ENCODE measurements at regions of chrX and their contacts with region 1.

Region 1: DNA sequence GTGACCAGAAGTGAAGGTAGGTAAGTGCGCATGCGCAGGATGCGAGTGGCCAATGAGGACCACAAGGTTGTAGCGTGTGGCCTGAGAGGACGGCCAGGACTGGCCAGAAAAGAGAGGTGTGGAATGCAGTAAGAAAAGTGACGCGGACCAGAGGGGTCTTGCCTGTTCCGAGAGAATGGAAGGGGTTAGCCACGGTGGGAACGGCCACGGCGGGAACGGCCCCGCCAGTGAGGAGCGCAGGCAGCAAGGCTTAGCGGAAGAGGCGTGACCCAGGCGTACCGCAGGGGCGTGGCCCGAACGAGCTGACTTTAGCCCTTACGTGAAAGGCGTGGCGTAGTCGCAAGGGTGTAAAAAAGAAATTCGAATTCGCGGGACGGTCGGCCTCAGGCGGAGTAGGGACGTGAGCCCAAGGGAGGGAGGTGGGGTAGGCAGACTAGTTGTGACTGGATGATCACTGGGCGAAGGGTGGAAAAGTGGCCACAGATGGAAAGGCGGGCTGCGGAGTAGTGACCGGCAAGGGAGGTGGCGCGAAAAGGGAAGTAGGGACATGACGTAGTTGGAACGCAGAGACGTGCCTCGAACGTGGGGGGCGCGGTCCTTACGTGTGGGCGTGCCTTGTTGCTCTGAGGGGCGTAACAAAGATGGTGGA is 10.4 kb upstream of the CLTRN start:
- DNase-seq: peak; percentile 99
- H3K4me3 ChIP-seq: peak overlapping the region; percentile 62 to 81 (median 64)
- H3K27ac ChIP-seq: peak overlapping the region; percentile 92 to 99 (median 96)
- H3K4me1 ChIP-seq: peaks cover 0 to 29% (median 6%) of the 10 kb centered on the region in 4 donors
- H3K27me3 ChIP-seq: no peaks in the 10 kb centered on the region
- CTCF ChIP-seq: no peak
- EP300 ChIP-seq: no peak
- POLR2A ChIP-seq: peak; percentile 25 to 28

Region 2: GRCh38 chrX:15335135-15336022 is 339.6 kb before region 1 on chrX and contains the start of gene PIGA:
- intact Hi-C with region 1: loop called (anchors 5 kb)
- DNase-seq: peak; percentile 98
- H3K4me3 ChIP-seq: peak within 1 kb of the TSS; percentile 70 to 78 (median 73)
- H3K27ac ChIP-seq: peak within 1 kb of the TSS; percentile 78 to 86 (median 82)
- H3K4me1 ChIP-seq: peaks cover 0 to 5% (median 0%) of the 10 kb centered on the region in 4 donors
- H3K27me3 ChIP-seq: no peaks in the 10 kb centered on the region
- CTCF ChIP-seq: no peak
- EP300 ChIP-seq: peak in 1 of 4 donors; percentile 37
- POLR2A ChIP-seq: peak; percentile 79 to 88
- total RNA-seq, gene PIGA: 3.9 to 8.0 (median 6.1) TPM

Region 3: DNA sequence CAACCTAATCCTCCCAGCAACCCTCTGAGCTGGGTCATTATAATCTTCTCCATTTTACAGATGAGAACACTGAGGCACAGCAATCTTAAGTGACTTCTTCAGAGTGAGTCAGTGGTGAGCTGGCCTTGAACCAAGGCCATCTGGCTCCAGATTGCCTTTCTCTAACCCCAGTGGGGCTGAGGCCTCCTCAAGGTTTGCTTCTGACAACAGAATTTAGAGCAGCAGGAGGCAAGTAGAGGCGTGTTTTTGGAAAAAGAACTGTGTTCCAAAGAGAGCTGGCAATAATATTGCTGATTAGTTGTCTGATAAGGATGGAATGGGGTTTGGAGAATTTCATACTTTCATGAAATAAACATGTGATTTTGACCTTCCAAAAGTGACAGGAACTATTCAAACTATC is 223.0 kb before region 1 on chrX:
- intact Hi-C with region 1: no loop called
- DNase-seq: peak; percentile 66
- H3K4me3 ChIP-seq: no peak overlapping the region
- H3K27ac ChIP-seq: no peak overlapping the region
- H3K4me1 ChIP-seq: no peaks in the 10 kb centered on the region
- H3K27me3 ChIP-seq: no peaks in the 10 kb centered on the region
- CTCF ChIP-seq: no peak
- EP300 ChIP-seq: no peak
- POLR2A ChIP-seq: no peak

Region 4: DNA sequence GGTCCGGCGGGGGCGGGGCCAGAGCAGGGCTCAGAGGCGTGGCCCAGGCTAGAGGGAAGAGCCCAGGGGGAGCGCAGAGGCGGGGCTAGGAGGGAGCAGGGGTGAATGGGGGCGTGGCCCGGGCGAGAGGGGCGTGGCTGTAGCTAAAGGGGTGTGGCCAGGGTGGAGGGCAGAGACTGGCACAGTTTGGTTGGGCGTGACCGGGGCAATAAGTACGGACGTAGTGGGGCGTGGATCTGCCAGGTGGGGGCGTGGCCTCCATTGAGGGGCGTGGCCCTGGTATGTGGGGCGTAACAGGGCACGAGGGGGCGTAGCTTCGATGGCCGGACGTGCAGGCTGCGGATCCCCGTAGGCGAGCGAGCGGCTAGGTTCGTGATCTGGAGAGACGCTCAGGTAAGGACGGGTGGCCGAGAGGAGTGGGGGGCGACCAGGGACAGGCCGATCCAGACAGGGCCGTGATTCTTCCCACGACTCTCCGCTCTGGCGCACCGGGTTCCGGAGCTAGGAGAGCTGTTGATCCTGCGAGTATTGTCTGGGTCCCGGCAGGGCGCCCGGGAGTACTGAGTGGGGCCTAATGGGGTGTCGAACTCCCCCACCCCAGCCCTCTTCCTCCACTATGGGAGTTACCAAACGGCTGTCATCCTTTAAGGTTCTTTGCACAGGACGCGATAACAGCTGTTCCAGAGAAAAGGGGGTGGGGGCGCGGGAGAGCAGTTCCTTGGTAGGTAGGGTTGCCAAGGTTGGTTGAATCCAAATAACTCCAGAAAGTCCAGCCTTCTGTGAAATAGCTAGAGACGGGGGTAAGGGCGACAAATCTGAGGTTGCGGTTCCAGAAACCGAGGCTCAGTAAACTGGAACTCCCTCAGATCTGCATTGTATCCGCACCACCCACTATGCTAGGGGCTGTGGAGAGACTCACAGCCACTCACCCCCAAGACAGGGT is 63.3 kb after region 1 on chrX and contains the start of gene CA5B:
- intact Hi-C with region 1: loop called (anchors 5 kb)
- DNase-seq: peak; percentile 96
- H3K4me3 ChIP-seq: peak within 1 kb of the TSS; percentile 25 to 56 (median 46)
- H3K27ac ChIP-seq: peak within 1 kb of the TSS; percentile 34 to 40 (median 37)
- H3K4me1 ChIP-seq: peaks cover 0 to 13% (median 0%) of the 10 kb centered on the region in 4 donors
- H3K27me3 ChIP-seq: peaks cover 0 to 6% (median 0%) of the 10 kb centered on the region in 3 donors
- CTCF ChIP-seq: no peak
- EP300 ChIP-seq: no peak
- POLR2A ChIP-seq: no peak
- total RNA-seq, gene CA5B: 3.9 to 8.6 (median 7.1) TPM

Region 5: GRCh38 chrX:15789979-15790768 is 115.2 kb after region 1 on chrX and contains the start of gene ZRSR2:
- intact Hi-C with region 1: no loop called
- DNase-seq: peak; percentile 92
- H3K4me3 ChIP-seq: peak within 1 kb of the TSS; percentile 59 to 88 (median 63)
- H3K27ac ChIP-seq: peak within 1 kb of the TSS; percentile 80 to 90 (median 84)
- H3K4me1 ChIP-seq: peaks cover 0 to 23% (median 4%) of the 10 kb centered on the region in 4 donors
- H3K27me3 ChIP-seq: no peaks in the 10 kb centered on the region
- CTCF ChIP-seq: no peak
- EP300 ChIP-seq: no peak
- POLR2A ChIP-seq: peak; percentile 46 to 48
- total RNA-seq, gene ZRSR2: 6.8 to 13.8 (median 11.8) TPM

Region 6: GRCh38 chrX:15888062-15888461 is 213.1 kb after region 1 on chrX:
- intact Hi-C with region 1: no loop called
- DNase-seq: no peak
- H3K4me3 ChIP-seq: no peak overlapping the region
- H3K27ac ChIP-seq: no peak overlapping the region
- H3K4me1 ChIP-seq: no peaks in the 10 kb centered on the region
- H3K27me3 ChIP-seq: no peaks in the 10 kb centered on the region
- CTCF ChIP-seq: no peak
- EP300 ChIP-seq: no peak
- POLR2A ChIP-seq: no peak

Region 7: DNA sequence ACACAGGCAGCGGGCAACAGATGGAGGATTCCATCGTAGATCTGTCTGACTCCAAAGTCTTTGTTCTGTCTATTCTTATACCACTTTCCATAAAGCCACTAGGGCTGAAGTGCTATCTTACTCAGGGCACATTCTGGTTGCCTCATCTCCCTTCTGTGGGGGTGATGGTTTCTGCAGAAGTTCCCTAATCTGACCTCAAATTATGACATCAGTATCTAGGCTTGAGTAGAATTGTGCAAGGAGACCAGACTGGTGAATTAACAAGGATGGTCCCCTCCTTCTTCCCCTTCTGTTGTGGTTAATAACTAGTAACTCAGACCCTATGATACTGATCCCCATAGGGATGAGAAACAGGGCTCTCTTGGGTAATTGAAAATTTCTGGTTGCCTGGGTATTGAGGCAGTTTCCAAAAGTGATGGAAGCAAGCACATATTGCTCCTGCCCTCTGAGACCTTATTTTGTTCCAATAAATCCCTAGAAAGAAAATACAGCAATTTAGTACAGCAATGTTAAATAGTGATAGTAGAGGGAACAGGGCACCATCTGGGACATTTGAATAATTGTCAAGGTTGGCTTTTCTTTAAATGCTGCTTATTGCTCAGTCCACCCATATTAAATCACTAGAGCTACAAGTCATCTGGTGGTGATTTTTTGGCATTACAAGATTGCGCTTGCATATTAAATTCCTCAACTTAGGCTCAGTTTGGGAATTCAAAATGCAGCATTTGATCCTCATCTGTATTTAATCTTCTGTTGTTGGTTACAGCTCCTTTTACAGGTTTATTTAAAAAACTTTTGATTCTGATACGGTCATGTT is 237.0 kb after region 1 on chrX:
- intact Hi-C with region 1: no loop called
- DNase-seq: no peak
- H3K4me3 ChIP-seq: no peak overlapping the region
- H3K27ac ChIP-seq: no peak overlapping the region
- H3K4me1 ChIP-seq: no peaks in the 10 kb centered on the region
- H3K27me3 ChIP-seq: no peaks in the 10 kb centered on the region
- CTCF ChIP-seq: no peak
- EP300 ChIP-seq: no peak
- POLR2A ChIP-seq: no peak

Region 8: DNA sequence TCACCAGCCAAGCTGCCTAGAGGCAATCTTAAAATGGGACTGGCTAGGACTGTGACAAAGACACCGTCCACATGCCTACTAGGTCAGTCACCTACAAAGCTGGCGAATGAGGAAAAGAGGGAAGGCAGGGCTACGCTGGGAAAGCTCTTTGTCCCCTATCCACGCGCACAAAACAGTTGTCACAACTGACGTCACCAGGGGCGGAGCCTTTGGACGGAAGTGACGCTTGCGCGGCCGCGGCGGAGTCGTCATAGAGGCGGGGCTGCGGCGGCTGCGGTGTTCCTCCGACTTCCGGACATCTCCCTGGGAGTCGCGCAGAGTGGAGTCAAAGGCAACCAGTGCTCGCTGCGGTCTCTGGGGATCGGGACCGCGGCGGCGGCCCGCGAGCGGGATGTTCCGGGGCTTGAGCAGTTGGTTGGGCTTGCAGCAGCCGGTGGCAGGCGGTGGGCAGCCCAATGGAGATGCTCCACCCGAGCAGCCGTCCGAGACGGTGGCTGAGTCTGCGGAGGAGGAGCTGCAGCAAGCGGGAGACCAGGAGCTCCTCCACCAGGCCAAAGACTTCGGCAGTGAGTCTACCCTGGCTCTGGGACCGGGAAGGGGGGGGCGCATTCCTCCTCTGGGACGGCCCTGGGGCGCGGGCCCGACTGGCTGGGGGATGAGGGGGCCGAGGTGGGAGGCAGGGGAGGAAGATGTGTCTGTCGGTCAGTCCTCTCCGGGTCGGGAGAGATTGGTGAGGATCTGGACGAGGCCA is 1044.5 kb after region 1 on chrX and contains the start of gene SYAP1:
- intact Hi-C with region 1: loop called (anchors 10 kb)
- DNase-seq: peak; percentile 99
- H3K4me3 ChIP-seq: peak within 1 kb of the TSS; percentile 62 to 83 (median 67)
- H3K27ac ChIP-seq: peak within 1 kb of the TSS; percentile 91 to 96 (median 94)
- H3K4me1 ChIP-seq: peaks cover 0 to 22% (median 12%) of the 10 kb centered on the region in 4 donors
- H3K27me3 ChIP-seq: no peaks in the 10 kb centered on the region
- CTCF ChIP-seq: no peak
- EP300 ChIP-seq: peak in 2 of 4 donors; percentile 67 to 86
- POLR2A ChIP-seq: peak; percentile 90 to 92
- total RNA-seq, gene SYAP1: 17.5 to 19.9 (median 19.4) TPM

Region 9: GRCh38 chrX:16870095-16870860 is 1195.3 kb after region 1 on chrX and contains the start of gene RBBP7:
- intact Hi-C with region 1: loop called (anchors 10 kb)
- DNase-seq: peak; percentile 97
- H3K4me3 ChIP-seq: peak within 1 kb of the TSS; percentile 53 to 74 (median 68)
- H3K27ac ChIP-seq: peak within 1 kb of the TSS; percentile 90 to 94 (median 90)
- H3K4me1 ChIP-seq: peaks cover 0 to 49% (median 27%) of the 10 kb centered on the region in 4 donors
- H3K27me3 ChIP-seq: no peaks in the 10 kb centered on the region
- CTCF ChIP-seq: no peak
- EP300 ChIP-seq: no peak
- POLR2A ChIP-seq: peak; percentile 85 to 92
- total RNA-seq, gene RBBP7: 99.8 to 130 (median 118) TPM

Measured in sigmoid colon (tissue), 7 donors.